PC-3 (cell line): ENCODE measurements at regions of chr10 and their contacts with region 1.

Region 1: DNA sequence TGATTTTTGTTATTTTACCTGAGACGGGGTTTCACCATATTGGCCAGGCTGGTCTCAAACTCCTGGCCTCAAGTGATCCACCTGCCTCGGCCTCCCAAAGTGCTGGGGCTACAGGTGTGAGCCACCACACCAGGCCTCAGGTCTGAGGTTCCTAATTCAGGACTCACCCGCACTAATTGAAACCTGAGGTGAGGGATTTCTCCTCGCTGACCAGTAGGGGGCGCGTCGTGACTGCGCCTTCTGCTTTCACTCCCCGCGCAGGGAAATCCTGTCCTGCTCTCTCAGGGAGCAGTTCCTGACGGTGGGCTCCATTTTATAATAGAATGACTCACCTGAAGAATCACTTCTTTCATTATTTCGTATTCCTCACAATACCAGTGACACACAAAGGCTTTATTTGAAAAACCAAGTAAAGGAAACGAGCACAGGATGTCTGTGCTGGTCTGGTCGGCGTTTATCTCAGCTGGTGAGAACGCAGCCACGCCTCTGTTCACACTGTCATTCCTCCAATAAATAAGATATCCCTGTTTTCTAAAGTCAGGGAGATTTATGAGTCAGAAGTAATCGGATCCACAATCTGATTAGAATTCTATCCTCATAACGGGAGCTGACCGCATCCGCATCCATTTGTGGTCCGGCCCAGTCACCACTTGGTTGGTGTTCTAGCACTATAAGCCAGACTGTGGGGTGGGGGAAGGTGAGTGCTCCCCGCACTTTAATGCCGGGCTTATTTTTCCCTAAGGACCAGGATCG is 35.4 kb downstream of the BAG3 start:
- DNase-seq: peak; percentile 92
- ATAC-seq: peak; percentile 82
- H3K4me3 ChIP-seq: peak overlapping the region; percentile 59
- H3K27ac ChIP-seq: peak overlapping the region; percentile 98
- H3K4me1 ChIP-seq: peaks cover 30% of the 10 kb centered on the region
- H3K27me3 ChIP-seq: no peaks in the 10 kb centered on the region
- CTCF ChIP-seq: peak; percentile 81

Region 2: GRCh38 chr10:119496273-119496672 is 190.3 kb before region 1 on chr10:
- CTCF ChIA-PET with region 1: no interaction called
- POLR2A ChIA-PET with region 1: no interaction called
- intact Hi-C with region 1: no loop called
- DNase-seq: peak; percentile 15
- ATAC-seq: no peak
- H3K4me3 ChIP-seq: no peak overlapping the region
- H3K27ac ChIP-seq: no peak overlapping the region
- H3K4me1 ChIP-seq: peaks cover 18% of the 10 kb centered on the region
- H3K27me3 ChIP-seq: no peaks in the 10 kb centered on the region
- CTCF ChIP-seq: no peak

Region 3: DNA sequence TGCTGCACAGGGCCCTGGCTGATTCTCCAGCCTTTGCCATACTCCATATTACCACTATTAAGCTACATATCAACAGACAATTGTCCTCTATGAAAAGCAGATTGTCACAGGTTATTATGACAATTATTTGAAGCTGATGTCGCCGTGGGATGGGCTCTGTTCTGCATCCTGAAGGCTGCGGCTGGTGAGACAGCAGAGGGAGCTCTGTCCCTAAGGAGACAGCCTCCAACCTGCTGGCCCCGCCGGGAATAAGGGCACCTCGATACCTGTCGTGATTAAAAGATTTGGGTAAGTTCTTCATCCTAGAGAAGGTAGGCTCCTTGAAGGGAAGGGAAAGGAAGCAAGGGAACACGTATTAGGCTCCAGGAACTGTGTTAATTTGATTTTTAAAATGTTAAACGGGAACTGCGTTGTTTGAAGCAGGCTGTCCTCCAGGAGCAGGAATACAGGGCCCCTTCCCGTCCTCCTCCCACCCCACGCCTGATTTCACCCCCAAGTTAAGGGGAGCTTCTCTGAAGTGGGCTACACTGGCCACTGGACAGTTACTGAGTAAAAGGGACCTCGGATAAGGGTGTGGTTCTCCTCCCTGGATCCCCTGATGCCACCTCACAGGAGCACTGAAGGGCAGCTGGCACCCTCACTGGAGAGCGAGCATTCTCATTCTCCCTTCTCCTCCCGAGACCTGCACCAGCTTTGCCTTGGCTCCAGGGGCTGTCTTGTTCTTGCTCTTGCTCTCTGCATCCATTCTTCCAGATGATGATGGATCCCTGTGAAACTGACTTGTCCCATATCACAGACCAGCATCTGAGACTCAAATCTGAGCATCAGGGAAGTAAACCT is 78.1 kb before region 1 on chr10:
- CTCF ChIA-PET with region 1: interaction called, 7 read pairs
- POLR2A ChIA-PET with region 1: no interaction called
- intact Hi-C with region 1: loop called (anchors 1 kb)
- DNase-seq: peak; percentile 63
- ATAC-seq: peak; percentile 100
- H3K4me3 ChIP-seq: no peak overlapping the region
- H3K27ac ChIP-seq: no peak overlapping the region
- H3K4me1 ChIP-seq: peaks cover 5% of the 10 kb centered on the region; the same call in 1 of the 2 replicates
- H3K27me3 ChIP-seq: no peaks in the 10 kb centered on the region
- CTCF ChIP-seq: peak; percentile 90

Region 4: GRCh38 chr10:119725828-119726675 is 39.4 kb after region 1 on chr10 and contains the start of gene INPP5F:
- CTCF ChIA-PET with region 1: interaction called, 6 read pairs
- POLR2A ChIA-PET with region 1: interaction called, 4 read pairs
- intact Hi-C with region 1: loop called (anchors 1 kb)
- DNase-seq: peak; percentile 93
- ATAC-seq: peak; percentile 89
- H3K4me3 ChIP-seq: peak within 1 kb of the TSS; percentile 82
- H3K27ac ChIP-seq: peak within 1 kb of the TSS; percentile 68
- H3K4me1 ChIP-seq: peaks cover 24% of the 10 kb centered on the region
- H3K27me3 ChIP-seq: no peaks in the 10 kb centered on the region
- CTCF ChIP-seq: no peak
- total RNA-seq, gene INPP5F: 8.1 and 8.2 TPM in 2 replicates

Region 5: GRCh38 chr10:119750391-119751230 is 64.0 kb after region 1 on chr10:
- CTCF ChIA-PET with region 1: interaction called, 11 read pairs
- POLR2A ChIA-PET with region 1: no interaction called
- intact Hi-C with region 1: no loop called
- DNase-seq: peak; percentile 70
- ATAC-seq: peak; percentile 81
- H3K4me3 ChIP-seq: no peak overlapping the region
- H3K27ac ChIP-seq: no peak overlapping the region
- H3K4me1 ChIP-seq: no peaks in the 10 kb centered on the region
- H3K27me3 ChIP-seq: no peaks in the 10 kb centered on the region
- CTCF ChIP-seq: peak; percentile 83

Region 6: DNA sequence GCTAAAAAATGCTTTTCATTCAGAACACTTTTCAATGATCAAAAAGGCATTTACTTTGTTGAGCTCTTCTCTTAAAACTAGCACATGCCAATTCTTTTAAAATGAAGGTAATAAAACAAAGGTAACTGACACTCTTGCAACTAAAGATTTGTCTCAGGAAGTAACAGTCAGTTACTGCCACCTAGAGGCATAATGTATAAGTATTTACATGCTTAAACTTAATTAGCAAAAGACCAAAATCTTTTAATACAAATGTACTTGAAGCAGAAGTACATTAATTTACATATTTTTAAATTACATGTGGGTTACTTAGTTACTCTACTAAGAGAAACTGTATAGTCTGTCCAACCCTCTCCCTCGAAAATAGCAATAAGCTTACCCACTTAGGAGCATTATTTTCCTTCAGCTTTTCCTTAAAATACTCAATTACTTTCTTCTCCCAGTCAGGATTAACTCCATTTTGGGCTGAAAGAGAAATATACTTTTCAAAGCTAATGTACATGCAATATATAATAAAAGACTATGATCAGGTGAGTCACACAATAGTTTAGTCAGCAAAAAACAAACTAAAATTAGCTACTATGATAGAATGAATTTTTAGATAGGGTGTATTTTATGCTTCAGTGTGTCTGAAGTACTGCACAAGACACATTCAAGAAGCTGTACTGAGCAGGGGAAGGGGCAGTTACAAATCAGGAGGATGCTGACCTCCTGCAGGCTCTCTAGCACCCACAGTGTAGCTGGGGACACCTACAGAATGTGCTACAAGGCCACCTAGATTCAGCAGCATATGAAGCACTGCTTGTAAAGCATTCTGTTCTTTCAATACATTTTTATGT is 173.0 kb after region 1 on chr10:
- CTCF ChIA-PET with region 1: no interaction called
- POLR2A ChIA-PET with region 1: no interaction called
- intact Hi-C with region 1: loop called (anchors 5 kb)
- DNase-seq: peak; percentile 65
- ATAC-seq: peak; percentile 45
- H3K4me3 ChIP-seq: no peak overlapping the region
- H3K27ac ChIP-seq: 0 out of 2 replicates have a peak overlapping the region, but pooled peaks have one; percentile 0
- H3K4me1 ChIP-seq: peaks cover 10% of the 10 kb centered on the region; the same call in 1 of the 2 replicates
- H3K27me3 ChIP-seq: no peaks in the 10 kb centered on the region
- CTCF ChIP-seq: peak; percentile 72

Region 7: DNA sequence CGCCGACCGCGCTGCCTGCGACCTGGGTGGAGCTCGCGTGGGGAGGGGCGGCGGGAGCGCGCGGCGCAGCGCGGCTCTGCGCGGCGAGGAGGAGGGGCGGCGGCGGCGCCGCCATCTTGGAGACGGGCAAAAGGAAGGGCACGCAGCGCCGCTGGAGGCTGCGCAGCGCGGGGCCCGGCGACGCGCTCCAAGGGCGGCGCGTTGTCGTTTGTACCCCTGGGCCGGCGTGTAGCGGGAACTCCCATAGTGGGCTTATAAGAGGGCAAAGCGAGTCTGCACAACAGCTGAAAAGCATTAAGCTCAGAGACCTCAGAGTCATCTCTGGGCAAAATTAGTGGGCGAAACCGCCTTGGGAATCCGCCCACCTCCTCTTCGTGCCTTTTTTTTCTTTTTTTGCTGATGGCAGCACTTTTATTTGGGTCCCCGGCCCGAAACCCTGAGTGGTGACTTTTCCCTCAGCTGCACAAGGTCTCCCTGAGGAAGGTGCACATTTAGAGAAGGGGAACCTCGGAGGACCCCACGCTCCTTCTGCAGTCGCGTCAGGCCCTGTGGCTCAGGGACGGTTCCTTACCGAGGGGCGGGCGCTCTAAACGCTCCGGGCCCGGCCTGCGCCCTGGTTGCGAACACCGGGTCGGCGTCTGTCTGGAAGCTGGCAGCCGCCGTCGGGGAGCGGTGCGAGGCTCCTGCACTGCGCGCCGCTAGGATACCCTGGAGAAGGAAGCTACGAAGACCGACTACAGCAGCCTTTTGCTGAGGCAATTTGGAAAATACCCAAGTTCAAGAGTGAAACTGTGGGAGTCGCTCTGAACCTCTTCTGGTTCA is 186.5 kb after region 1 on chr10:
- CTCF ChIA-PET with region 1: no interaction called
- POLR2A ChIA-PET with region 1: no interaction called
- intact Hi-C with region 1: loop called (anchors 5 kb)
- DNase-seq: peak; percentile 81
- ATAC-seq: peak; percentile 91
- H3K4me3 ChIP-seq: peak overlapping the region; percentile 94
- H3K27ac ChIP-seq: peak overlapping the region; percentile 4; the same call in 1 of the 2 replicates
- H3K4me1 ChIP-seq: peaks cover 9% of the 10 kb centered on the region; the same call in 1 of the 2 replicates
- H3K27me3 ChIP-seq: no peaks in the 10 kb centered on the region
- CTCF ChIP-seq: no peak